ENCODE measurements at regions of chr2 and their contacts with region 1.

Region 1: DNA sequence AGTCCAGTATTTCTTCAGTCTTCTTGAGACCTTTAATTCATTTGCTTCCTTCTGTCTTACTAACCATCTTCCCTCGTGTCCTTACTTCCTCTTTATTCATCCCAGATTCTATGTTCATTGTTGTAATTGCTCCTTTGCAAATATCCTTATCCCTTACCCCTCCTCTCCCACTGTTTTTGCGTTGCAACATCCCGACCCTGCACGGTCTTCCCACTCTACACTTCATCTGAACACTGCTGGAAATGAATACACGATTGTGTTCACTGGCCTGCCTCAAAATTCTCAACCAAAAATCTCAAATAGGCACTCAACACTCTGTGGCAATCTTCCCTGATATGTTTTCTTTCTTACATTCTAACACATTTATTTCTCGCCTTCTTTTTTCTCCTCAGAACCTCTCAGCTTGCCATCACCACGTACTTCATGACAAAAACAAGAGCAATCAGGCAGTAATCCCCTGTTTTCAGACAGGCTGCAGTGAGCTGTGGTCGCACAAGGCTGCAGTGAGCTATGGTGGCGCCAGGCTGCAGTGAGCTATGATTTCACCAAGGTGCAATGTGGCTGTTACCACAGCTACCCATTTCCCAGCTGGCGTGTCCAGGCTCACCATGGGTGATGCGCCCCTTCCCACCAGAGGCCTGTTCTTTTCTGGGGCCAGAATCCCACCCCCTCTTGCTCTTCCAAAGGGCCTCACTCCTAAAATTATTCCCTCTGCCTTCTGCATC is 25.7 kb downstream of the TCF23 start:
- DNase-seq: no peak
- H3K4me3 ChIP-seq: no peak overlapping the region
- H3K27ac ChIP-seq: no peak overlapping the region
- H3K4me1 ChIP-seq: no peaks in the 10 kb centered on the region
- H3K27me3 ChIP-seq: peaks cover 30 to 34% of the 10 kb centered on the region in 2 experiments
- CTCF ChIP-seq: no peak
- POLR2A ChIP-seq: no peak

Region 2: GRCh38 chr2:27118525-27119329 is 55.8 kb before region 1 on chr2 and contains the start of gene CGREF1:
- CTCF ChIA-PET with region 1: no interaction called
- POLR2A ChIA-PET with region 1: no interaction called
- dilution Hi-C with region 1: no loop called
- intact Hi-C with region 1: no loop called
- DNase-seq: peak; percentile 22
- H3K4me3 ChIP-seq: peak within 1 kb of the TSS in 2 of 3 experiments; percentile 5 to 43
- H3K27ac ChIP-seq: no peak within 1 kb of the TSS
- H3K4me1 ChIP-seq: no peaks in the 10 kb centered on the region
- H3K27me3 ChIP-seq: peaks cover 13 to 25% of the 10 kb centered on the region in 2 experiments
- CTCF ChIP-seq: no peak
- POLR2A ChIP-seq: no peak
- total RNA-seq, gene CGREF1: 4.0 and 5.8 TPM in 2 replicates

Region 3: DNA sequence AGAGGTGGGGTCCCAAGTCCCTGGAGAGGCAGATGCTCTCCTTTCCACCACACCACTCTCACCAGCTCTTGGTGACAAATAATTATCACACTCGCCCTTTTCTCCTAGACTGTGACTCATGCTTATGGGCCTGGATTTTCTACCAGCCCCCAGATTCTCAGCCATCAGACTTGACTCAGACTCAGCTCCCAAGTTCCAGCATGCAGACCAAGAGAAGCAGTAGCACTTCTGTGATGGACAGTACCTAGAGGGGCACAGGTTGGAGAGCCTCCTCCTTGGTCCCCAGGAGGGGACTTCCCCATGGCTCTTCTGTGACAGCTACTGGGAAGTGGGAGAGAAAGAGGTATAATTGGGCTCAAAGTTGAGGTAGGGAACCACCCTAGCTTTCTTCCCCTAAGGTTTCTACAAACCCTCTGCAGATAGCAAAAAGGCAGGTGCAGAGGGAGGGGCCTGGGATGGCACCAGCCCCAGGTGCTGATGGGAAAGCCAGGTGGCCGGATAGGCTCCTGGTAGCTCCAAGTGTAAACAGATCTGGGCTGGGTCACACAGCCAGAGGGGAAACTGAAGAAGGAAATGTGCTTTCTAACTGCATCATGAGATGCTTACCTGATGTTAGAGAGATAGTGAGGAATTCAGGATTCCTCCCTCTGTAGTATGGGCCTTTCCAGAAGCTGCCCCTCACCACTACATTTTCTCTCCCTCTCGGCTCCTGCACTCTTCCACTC is 21.5 kb before region 1 on chr2:
- CTCF ChIA-PET with region 1: interaction called, 23 read pairs
- POLR2A ChIA-PET with region 1: no interaction called
- dilution Hi-C with region 1: no loop called
- intact Hi-C with region 1: no loop called
- DNase-seq: no peak
- H3K4me3 ChIP-seq: no peak overlapping the region
- H3K27ac ChIP-seq: no peak overlapping the region
- H3K4me1 ChIP-seq: no peaks in the 10 kb centered on the region
- H3K27me3 ChIP-seq: no peaks in the 10 kb centered on the region
- CTCF ChIP-seq: no peak
- POLR2A ChIP-seq: no peak

Region 4: GRCh38 chr2:27162151-27163121 is 12.0 kb before region 1 on chr2:
- CTCF ChIA-PET with region 1: interaction called, 23 read pairs
- POLR2A ChIA-PET with region 1: no interaction called
- dilution Hi-C with region 1: no loop called
- intact Hi-C with region 1: no loop called
- DNase-seq: no peak
- H3K4me3 ChIP-seq: no peak overlapping the region
- H3K27ac ChIP-seq: no peak overlapping the region
- H3K4me1 ChIP-seq: no peaks in the 10 kb centered on the region
- H3K27me3 ChIP-seq: peaks cover 0 to 3% of the 10 kb centered on the region in 2 experiments
- CTCF ChIP-seq: no peak
- POLR2A ChIP-seq: no peak

Region 5: GRCh38 chr2:27296481-27296880 is 122.0 kb after region 1 on chr2:
- CTCF ChIA-PET with region 1: no interaction called
- POLR2A ChIA-PET with region 1: no interaction called
- dilution Hi-C with region 1: no loop called
- intact Hi-C with region 1: no loop called
- DNase-seq: no peak
- H3K4me3 ChIP-seq: no peak overlapping the region
- H3K27ac ChIP-seq: no peak overlapping the region
- H3K4me1 ChIP-seq: peaks cover 19% of the 10 kb centered on the region
- H3K27me3 ChIP-seq: no peaks in the 10 kb centered on the region
- CTCF ChIP-seq: no peak
- POLR2A ChIP-seq: no peak